Mucosa of descending colon (tissue), 3 donors: ENCODE measurements at regions of chr4 and their contacts with region 1.

Region 1: GRCh38 chr4:184343502-184344177 is 126.0 kb upstream of the ENPP6 start:
- DNase-seq: peak; percentile 79 to 85 (median 82)
- ATAC-seq: peak; percentile 67
- H3K4me3 ChIP-seq: peak overlapping the region; percentile 17
- H3K4me1 ChIP-seq: peaks cover 35% of the 10 kb centered on the region
- CTCF ChIP-seq: no peak

Region 2: DNA sequence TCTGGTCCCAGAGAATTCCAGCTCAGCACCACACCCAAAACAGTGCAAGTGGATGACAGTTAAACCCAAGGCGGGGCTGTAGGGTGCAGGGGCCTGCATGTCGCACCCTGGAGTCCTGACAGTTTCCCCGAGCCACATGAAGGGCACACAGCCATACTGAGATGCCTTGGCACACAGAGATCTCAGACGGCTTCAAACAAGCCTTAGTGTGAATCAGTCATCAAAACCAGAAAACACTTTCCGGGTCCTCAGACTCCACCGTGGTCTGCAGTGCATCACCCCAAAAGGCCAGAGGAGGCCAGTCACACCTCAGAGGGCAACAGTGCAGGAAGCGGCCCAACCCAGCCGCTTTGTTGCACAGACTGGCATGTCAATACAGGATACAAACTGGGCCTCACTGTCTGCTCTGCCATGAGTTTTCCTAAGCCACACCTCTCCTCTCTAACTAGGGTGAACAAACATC is 61.4 kb before region 1 on chr4:
- intact Hi-C with region 1: loop called in 1 of 2 experiments (anchors 10 kb)
- DNase-seq: peak; percentile 65 to 83 (median 77)
- ATAC-seq: peak; percentile 93
- H3K4me3 ChIP-seq: no peak overlapping the region
- H3K4me1 ChIP-seq: peaks cover 19% of the 10 kb centered on the region
- CTCF ChIP-seq: peak; percentile 14